ENCODE measurements at regions of chr13 and their contacts with region 1.

Region 1: GRCh38 chr13:28031220-28031895 is 42.9 kb upstream of the URAD start:
- DNase-seq: no peak
- ATAC-seq: peak; percentile 69
- H3K4me3 ChIP-seq: no peak overlapping the region
- H3K27ac ChIP-seq: peak overlapping the region; percentile 36; the same call in 1 of the 2 replicates
- H3K4me1 ChIP-seq: peaks cover 52% of the 10 kb centered on the region
- H3K27me3 ChIP-seq: no peaks in the 10 kb centered on the region
- CTCF ChIP-seq: no peak
- EP300 ChIP-seq: peak in 1 of 2 experiments; percentile 46; a peak in 1 of 4 replicates
- POLR2A ChIP-seq: no peak
- RAD21 ChIP-seq: 0 out of 2 replicates have a peak, but pooled peaks have one; percentile 1

Region 2: GRCh38 chr13:27905650-27906049 is 125.7 kb before region 1 on chr13:
- CTCF ChIA-PET with region 1: no interaction called
- POLR2A ChIA-PET with region 1: no interaction called
- RAD21 ChIA-PET with region 1: no interaction called
- SMC1A ChIA-PET with region 1: no interaction called
- in situ Hi-C with region 1: no loop called
- intact Hi-C with region 1: no loop called
- DNase-seq: no peak
- ATAC-seq: no peak
- H3K4me3 ChIP-seq: no peak overlapping the region
- H3K27ac ChIP-seq: no peak overlapping the region
- H3K4me1 ChIP-seq: no peaks in the 10 kb centered on the region
- H3K27me3 ChIP-seq: peaks cover 0 to 2% of the 10 kb centered on the region in 2 experiments; a peak in 2 of 4 replicates
- CTCF ChIP-seq: no peak
- EP300 ChIP-seq: no peak
- POLR2A ChIP-seq: no peak
- RAD21 ChIP-seq: no peak

Region 3: DNA sequence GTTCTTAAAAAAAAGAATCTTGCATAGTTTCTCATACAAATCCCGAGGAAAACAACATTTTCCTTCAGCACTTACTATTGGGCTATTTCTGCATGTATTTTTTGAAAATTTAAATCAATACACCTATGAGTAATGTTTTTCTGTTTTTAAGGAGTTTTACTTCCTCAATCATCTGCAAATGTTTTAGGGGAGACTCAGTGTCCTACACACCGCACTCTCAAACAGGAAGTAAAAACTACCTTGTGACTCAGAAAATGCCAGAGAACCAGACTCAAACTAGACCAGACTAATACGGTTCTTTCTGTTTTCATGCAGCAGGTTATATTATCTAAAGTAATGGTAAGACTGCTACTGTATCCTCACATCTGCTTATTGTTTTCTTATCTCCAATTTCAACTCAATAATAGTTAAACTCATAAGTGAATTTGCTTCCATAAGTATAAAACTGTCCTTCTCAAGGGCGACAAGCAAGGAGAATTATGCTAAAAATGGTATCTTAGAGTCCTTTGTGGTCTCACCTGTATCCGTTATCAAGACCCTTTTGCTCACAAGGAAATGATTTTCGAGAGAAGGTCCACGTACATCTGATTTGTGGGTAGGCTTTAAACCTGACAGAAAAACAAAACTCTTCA is 16.5 kb after region 1 on chr13:
- CTCF ChIA-PET with region 1: interaction called, 6 read pairs
- POLR2A ChIA-PET with region 1: interaction called, 4 read pairs
- RAD21 ChIA-PET with region 1: interaction called, 12 read pairs
- SMC1A ChIA-PET with region 1: interaction called, 12 read pairs
- in situ Hi-C with region 1: no loop called
- intact Hi-C with region 1: no loop called
- DNase-seq: peak; percentile 94
- ATAC-seq: peak; percentile 87
- H3K4me3 ChIP-seq: peak overlapping the region; percentile 57; the same call in 1 of the 2 replicates
- H3K27ac ChIP-seq: peak overlapping the region; percentile 88
- H3K4me1 ChIP-seq: peaks cover 44% of the 10 kb centered on the region
- H3K27me3 ChIP-seq: no peaks in the 10 kb centered on the region
- CTCF ChIP-seq: no peak
- EP300 ChIP-seq: peak; percentile 5 to 80; a peak in 3 of 4 replicates
- POLR2A ChIP-seq: no peak
- RAD21 ChIP-seq: no peak

Region 4: GRCh38 chr13:28052945-28053344 is 21.6 kb after region 1 on chr13:
- CTCF ChIA-PET with region 1: interaction called, 6 read pairs
- POLR2A ChIA-PET with region 1: interaction called, 4 read pairs
- RAD21 ChIA-PET with region 1: interaction called, 12 read pairs
- SMC1A ChIA-PET with region 1: interaction called, 18 read pairs
- in situ Hi-C with region 1: no loop called
- intact Hi-C with region 1: no loop called
- DNase-seq: no peak
- ATAC-seq: no peak
- H3K4me3 ChIP-seq: no peak overlapping the region
- H3K27ac ChIP-seq: no peak overlapping the region
- H3K4me1 ChIP-seq: peaks cover 43% of the 10 kb centered on the region
- H3K27me3 ChIP-seq: no peaks in the 10 kb centered on the region
- CTCF ChIP-seq: no peak
- EP300 ChIP-seq: no peak
- POLR2A ChIP-seq: no peak
- RAD21 ChIP-seq: no peak

Region 5: DNA sequence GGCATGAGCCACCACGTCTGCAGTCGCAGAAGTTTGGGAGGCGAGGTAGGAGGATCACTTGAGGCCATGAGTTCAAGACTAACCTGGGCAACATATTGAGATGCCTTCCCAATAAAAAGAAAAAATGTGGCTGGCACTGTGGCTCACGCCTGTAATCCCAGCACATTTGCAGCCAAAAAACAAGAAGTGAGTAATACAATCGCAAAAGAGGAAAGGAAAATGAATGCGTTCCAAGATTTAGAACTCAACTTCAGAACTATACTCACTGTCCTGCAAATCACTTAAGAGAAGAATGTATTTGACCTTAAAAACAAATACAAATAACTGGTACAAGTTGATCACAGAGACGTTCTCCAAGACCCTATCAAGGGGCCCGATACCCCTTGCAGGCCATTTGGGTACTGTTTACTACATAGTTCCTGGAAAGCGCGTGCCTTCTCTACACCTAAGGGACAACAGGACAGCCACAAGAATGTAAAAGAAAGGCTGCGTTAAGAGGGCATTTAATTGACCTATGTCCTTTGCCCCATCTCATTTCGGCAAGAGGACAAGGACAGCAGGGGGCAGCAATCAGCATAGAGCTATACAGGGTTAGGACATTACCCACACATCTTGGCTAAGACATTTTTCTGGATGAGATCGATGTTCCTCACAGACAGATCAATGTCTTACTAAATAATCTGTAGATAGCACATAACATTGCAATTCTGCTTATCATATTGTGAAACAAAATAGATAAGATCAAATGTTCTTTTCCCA is 27.7 kb after region 1 on chr13:
- CTCF ChIA-PET with region 1: interaction called, 5 read pairs
- POLR2A ChIA-PET with region 1: interaction called, 3 read pairs
- RAD21 ChIA-PET with region 1: interaction called, 6 read pairs
- SMC1A ChIA-PET with region 1: interaction called, 18 read pairs
- in situ Hi-C with region 1: no loop called
- intact Hi-C with region 1: no loop called
- DNase-seq: no peak
- ATAC-seq: peak; percentile 47; the same call in 2 of the 3 replicates
- H3K4me3 ChIP-seq: no peak overlapping the region
- H3K27ac ChIP-seq: no peak overlapping the region
- H3K4me1 ChIP-seq: peaks cover 19% of the 10 kb centered on the region
- H3K27me3 ChIP-seq: no peaks in the 10 kb centered on the region
- CTCF ChIP-seq: peak; percentile 34 to 49 (median 44); a peak in 4 of 6 replicates
- EP300 ChIP-seq: no peak
- POLR2A ChIP-seq: no peak
- RAD21 ChIP-seq: peak; percentile 45; the same call in 1 of the 2 replicates

Measured in GM12878 (cell line).